HepG2 (cell line): ENCODE measurements at regions of chr18 and their contacts with region 1.

Region 1: GRCh38 chr18:11654736-11655605 is 34.1 kb upstream of the GNAL start:
- DNase-seq: no peak
- ATAC-seq: peak; percentile 85
- H3K4me3 ChIP-seq: no peak overlapping the region
- H3K27ac ChIP-seq: no peak overlapping the region
- H3K4me1 ChIP-seq: no peaks in the 10 kb centered on the region
- H3K27me3 ChIP-seq: peaks cover 6 to 36% of the 10 kb centered on the region in 2 experiments; a peak in 4 of 5 replicates
- CTCF ChIP-seq: peak; percentile 73
- EP300 ChIP-seq: no peak
- POLR2A ChIP-seq: no peak
- RAD21 ChIP-seq: peak; percentile 60

Region 2: GRCh38 chr18:11733031-11733430 is 78.1 kb after region 1 on chr18:
- CTCF ChIA-PET with region 1: interaction called, 4 read pairs
- POLR2A ChIA-PET with region 1: no interaction called
- in situ Hi-C with region 1: loop called (anchors 10 kb)
- intact Hi-C with region 1: no loop called
- DNase-seq: peak; percentile 32
- ATAC-seq: peak; percentile 98
- H3K4me3 ChIP-seq: peak overlapping the region in 1 of 3 experiments; percentile 12; a peak in 1 of 6 replicates
- H3K27ac ChIP-seq: no peak overlapping the region
- H3K4me1 ChIP-seq: no peaks in the 10 kb centered on the region
- H3K27me3 ChIP-seq: peaks cover 0 to 9% of the 10 kb centered on the region in 2 experiments; a peak in 2 of 5 replicates
- CTCF ChIP-seq: peak; percentile 93
- EP300 ChIP-seq: no peak
- POLR2A ChIP-seq: no peak
- RAD21 ChIP-seq: peak; percentile 85

Region 3: DNA sequence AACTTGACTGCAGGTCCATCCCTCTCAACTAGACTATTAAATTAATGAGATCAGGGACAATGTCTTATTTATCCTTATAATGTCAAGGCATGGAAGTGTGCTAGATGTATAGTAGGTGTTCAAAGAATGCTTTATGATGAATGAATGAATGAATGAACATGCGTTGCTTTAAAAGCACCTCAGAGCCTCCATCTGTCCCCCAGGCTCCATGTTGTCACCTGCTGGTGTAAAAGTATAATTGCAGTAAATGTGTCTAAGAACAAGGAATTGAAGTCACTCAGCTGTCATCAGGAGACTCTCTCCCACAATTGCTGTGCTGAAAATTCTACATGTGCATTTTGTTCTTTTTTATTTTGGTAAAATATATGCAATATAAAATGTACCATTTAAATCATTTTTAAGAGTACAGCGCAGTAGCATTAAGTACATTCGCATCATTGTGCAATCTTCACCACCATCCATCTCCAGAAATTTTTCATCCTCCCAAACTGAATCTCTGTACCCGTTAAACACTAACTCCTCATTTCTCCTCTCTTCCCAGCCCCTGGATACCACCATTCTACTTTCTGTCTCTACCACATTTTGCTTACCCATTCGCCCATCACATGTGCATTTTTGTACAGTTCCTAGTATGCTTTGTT is 86.7 kb after region 1 on chr18:
- CTCF ChIA-PET with region 1: interaction called, 6 read pairs
- POLR2A ChIA-PET with region 1: no interaction called
- in situ Hi-C with region 1: no loop called
- intact Hi-C with region 1: loop called (anchors 10 kb)
- DNase-seq: peak; percentile 11
- ATAC-seq: peak; percentile 58; the same call in 2 of the 3 replicates
- H3K4me3 ChIP-seq: no peak overlapping the region
- H3K27ac ChIP-seq: no peak overlapping the region
- H3K4me1 ChIP-seq: no peaks in the 10 kb centered on the region
- H3K27me3 ChIP-seq: peaks cover 2 to 31% of the 10 kb centered on the region in 2 experiments
- CTCF ChIP-seq: peak; percentile 51
- EP300 ChIP-seq: no peak
- POLR2A ChIP-seq: no peak
- RAD21 ChIP-seq: no peak

Region 4: DNA sequence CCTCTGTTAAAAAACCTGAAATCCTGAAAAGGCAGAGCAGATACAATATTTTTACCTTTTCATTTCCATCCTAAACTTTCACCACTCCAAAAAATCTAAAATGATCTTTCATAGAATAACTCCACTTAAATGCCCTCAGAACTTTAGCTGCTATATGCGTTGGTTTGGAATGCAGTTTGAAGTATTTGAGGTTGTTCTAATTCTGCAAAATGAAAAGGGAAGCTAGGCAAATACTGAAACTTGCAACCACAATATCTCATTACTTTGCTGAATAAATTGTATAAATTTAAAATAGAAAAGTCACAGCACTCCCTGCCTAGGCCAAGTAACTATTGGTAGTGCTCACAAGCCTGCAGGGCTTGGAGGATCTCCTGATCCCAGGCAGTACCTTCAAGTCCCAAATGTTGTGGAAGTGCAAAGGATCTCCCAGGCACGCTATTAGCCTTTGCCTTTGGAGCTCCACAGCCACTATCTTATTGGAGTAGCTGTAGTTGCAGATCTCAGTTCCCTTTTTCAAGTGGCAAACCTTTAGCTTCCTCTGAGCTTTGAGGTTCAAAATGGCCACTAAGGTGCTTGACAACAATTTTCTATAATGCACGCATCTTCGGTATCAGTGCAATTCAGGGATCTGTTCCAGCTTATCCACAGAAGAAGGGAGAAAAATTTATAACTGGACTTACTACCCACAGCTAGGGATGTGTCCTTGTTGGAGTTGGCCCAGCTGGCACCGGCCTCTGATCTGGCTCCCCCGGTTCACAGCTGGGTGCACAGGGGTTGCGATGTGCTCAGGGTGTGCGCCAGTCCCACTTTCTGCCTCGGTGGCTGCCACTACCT is 395.2 kb after region 1 on chr18:
- CTCF ChIA-PET with region 1: no interaction called
- POLR2A ChIA-PET with region 1: no interaction called
- in situ Hi-C with region 1: loop called (anchors 10 kb)
- intact Hi-C with region 1: no loop called
- DNase-seq: no peak
- ATAC-seq: no peak
- H3K4me3 ChIP-seq: no peak overlapping the region
- H3K27ac ChIP-seq: no peak overlapping the region
- H3K4me1 ChIP-seq: no peaks in the 10 kb centered on the region
- H3K27me3 ChIP-seq: peaks cover 2 to 11% of the 10 kb centered on the region in 2 experiments; a peak in 3 of 5 replicates
- CTCF ChIP-seq: no peak
- EP300 ChIP-seq: no peak
- POLR2A ChIP-seq: no peak
- RAD21 ChIP-seq: no peak